Body of pancreas (tissue), 4 donors: ENCODE measurements at regions of chr11 and their contacts with region 1.

Region 1: GRCh38 chr11:119373921-119374631 is 7.4 kb downstream of the USP2 start:
- DNase-seq: peak; percentile 79 to 87 (median 82)
- ATAC-seq: peak; percentile 55
- H3K4me3 ChIP-seq: no peak overlapping the region
- H3K27ac ChIP-seq: peak overlapping the region in 3 of 4 donors; percentile 88 to 95 (median 90)
- H3K4me1 ChIP-seq: peaks cover 95% of the 10 kb centered on the region
- H3K27me3 ChIP-seq: no peaks in the 10 kb centered on the region
- CTCF ChIP-seq: peak; percentile 77 to 93 (median 91)
- POLR2A ChIP-seq: no peak

Region 2: GRCh38 chr11:119095066-119095880 is 278.8 kb before region 1 on chr11:
- intact Hi-C with region 1: no loop called
- DNase-seq: peak; percentile 99 to 100 (median 100)
- ATAC-seq: peak; percentile 94
- H3K4me3 ChIP-seq: peak overlapping the region; percentile 80 to 87
- H3K27ac ChIP-seq: peak overlapping the region; percentile 79 to 95 (median 92)
- H3K4me1 ChIP-seq: peaks cover 28% of the 10 kb centered on the region
- H3K27me3 ChIP-seq: no peaks in the 10 kb centered on the region
- CTCF ChIP-seq: peak in 4 of 7 experiments; percentile 7 to 39 (median 32)
- POLR2A ChIP-seq: peak; percentile 99 to 100 (median 99)

Region 3: GRCh38 chr11:119205574-119206510 is 168.2 kb before region 1 on chr11 and contains the start of gene CBL:
- intact Hi-C with region 1: loop called (anchors 10 kb)
- DNase-seq: peak; percentile 95 to 97 (median 96)
- ATAC-seq: peak; percentile 94
- H3K4me3 ChIP-seq: peak within 1 kb of the TSS; percentile 92 to 100
- H3K27ac ChIP-seq: peak within 1 kb of the TSS; percentile 87 to 96 (median 92)
- H3K4me1 ChIP-seq: peaks cover 16% of the 10 kb centered on the region
- H3K27me3 ChIP-seq: no peaks in the 10 kb centered on the region
- CTCF ChIP-seq: peak; percentile 89 to 98 (median 92)
- POLR2A ChIP-seq: peak; percentile 41 to 57 (median 55)
- total RNA-seq, gene CBL: 3.0 to 6.5 TPM

Region 4: DNA sequence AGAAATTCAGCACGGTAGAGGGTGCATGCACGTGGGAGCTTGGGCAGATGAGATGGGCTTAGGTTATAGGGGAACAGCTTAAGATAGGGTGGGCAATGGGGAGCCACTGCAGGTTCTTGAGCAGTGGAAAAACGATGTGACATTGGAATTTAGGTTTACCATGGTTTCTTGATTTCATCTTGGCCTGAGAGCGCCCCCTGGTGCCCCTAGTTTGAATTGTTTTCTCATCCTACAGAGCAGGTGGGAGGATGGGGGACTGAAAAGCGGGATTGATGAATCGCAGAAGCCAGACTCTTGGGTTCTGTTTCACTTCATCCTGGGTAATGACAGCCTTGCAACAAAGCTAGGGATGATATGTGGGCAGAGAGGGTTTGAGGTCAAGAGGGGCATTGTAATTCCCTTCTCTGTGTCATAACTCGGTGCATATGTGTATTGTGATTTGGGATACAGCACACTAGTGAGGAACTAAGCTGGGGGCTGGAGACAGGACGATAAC is 50.5 kb before region 1 on chr11:
- intact Hi-C with region 1: loop called (anchors 5 kb)
- DNase-seq: peak; percentile 70 to 83 (median 74)
- ATAC-seq: no peak
- H3K4me3 ChIP-seq: no peak overlapping the region
- H3K27ac ChIP-seq: no peak overlapping the region
- H3K4me1 ChIP-seq: peaks cover 23% of the 10 kb centered on the region
- H3K27me3 ChIP-seq: no peaks in the 10 kb centered on the region
- CTCF ChIP-seq: peak in 6 of 7 experiments; percentile 64 to 80 (median 66)
- POLR2A ChIP-seq: no peak

Region 5: GRCh38 chr11:119338318-119338907 is 35.7 kb before region 1 on chr11:
- intact Hi-C with region 1: loop called (anchors 5 kb)
- DNase-seq: peak; percentile 68 to 75 (median 72)
- ATAC-seq: peak; percentile 23
- H3K4me3 ChIP-seq: no peak overlapping the region
- H3K27ac ChIP-seq: peak overlapping the region in 1 of 4 donors; percentile 18
- H3K4me1 ChIP-seq: peaks cover 56% of the 10 kb centered on the region
- H3K27me3 ChIP-seq: no peaks in the 10 kb centered on the region
- CTCF ChIP-seq: peak; percentile 55 to 82 (median 74)
- POLR2A ChIP-seq: no peak